ENCODE measurements at regions of chr2 and their contacts with region 1.

Region 1: GRCh38 chr2:136107051-136108033 is 10.6 kb downstream of the CXCR4 start:
- DNase-seq: no peak
- ATAC-seq: peak; percentile 68
- H3K4me3 ChIP-seq: no peak overlapping the region
- H3K27ac ChIP-seq: no peak overlapping the region
- H3K4me1 ChIP-seq: peaks cover 15% of the 10 kb centered on the region; the same call in 1 of the 2 replicates
- H3K27me3 ChIP-seq: no peaks in the 10 kb centered on the region
- CTCF ChIP-seq: no peak
- EP300 ChIP-seq: peak in 1 of 2 experiments; percentile 59; a peak in 2 of 4 replicates
- POLR2A ChIP-seq: no peak
- RAD21 ChIP-seq: no peak

Region 2: DNA sequence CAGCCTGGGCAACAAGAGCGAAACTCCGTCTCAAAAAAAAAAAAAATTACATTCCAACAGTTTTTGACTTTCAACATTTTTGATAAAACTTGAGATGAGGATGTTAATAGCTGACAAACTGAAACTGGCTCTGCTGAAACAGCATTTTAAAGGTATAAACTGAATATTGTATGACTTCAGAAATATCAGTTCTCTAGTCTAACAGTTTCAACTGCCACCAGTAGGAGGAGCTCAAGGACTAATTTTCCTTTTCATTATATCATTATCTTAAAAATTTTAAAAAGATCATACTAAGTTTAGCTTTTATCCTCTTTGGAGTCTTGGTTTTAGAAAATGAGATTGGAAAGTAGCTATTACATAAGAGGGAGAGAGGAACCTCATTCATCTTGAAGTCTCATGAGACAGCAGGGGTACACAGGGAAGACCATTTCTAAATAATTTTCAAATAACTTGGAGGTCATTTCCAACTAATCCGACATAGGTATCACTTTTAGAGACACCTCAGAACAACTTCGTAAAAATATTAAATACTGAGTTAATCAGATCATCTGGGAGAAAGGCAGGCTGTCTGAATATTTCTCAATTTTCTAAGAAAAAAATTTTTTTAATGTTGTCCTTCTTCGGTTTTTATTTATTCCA is 193.5 kb before region 1 on chr2:
- CTCF ChIA-PET with region 1: interaction called, 5 read pairs
- POLR2A ChIA-PET with region 1: no interaction called
- RAD21 ChIA-PET with region 1: interaction called, 7 read pairs
- SMC1A ChIA-PET with region 1: interaction called, 12 read pairs
- in situ Hi-C with region 1: no loop called
- intact Hi-C with region 1: no loop called
- DNase-seq: no peak
- ATAC-seq: peak; percentile 75
- H3K4me3 ChIP-seq: no peak overlapping the region
- H3K27ac ChIP-seq: no peak overlapping the region
- H3K4me1 ChIP-seq: no peaks in the 10 kb centered on the region
- H3K27me3 ChIP-seq: no peaks in the 10 kb centered on the region
- CTCF ChIP-seq: peak; percentile 58 to 68 (median 63); a peak in 5 of 6 replicates
- EP300 ChIP-seq: no peak
- POLR2A ChIP-seq: no peak
- RAD21 ChIP-seq: peak; percentile 75

Region 3: DNA sequence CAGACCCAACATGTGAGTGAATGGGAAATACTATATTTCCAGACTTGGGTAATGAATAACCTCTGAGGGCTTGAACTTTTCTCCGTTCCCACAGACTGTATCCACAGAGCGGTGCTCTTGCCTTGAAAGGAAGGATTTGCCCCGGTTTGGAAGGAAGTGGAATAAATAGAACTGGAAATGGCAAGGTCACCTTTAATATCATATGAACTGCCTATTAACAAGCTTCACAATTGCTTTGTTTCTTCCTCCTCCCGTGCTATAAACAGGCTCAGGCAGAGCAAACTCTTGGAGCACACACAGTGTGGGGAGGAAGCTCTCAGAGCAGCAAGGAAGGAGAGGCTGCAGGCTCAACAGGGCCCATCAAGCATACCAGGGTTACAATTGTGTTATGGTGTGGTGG is 93.4 kb before region 1 on chr2:
- CTCF ChIA-PET with region 1: interaction called, 5 read pairs
- POLR2A ChIA-PET with region 1: interaction called, 5 read pairs
- RAD21 ChIA-PET with region 1: interaction called, 3 read pairs
- SMC1A ChIA-PET with region 1: interaction called, 10 read pairs
- in situ Hi-C with region 1: no loop called
- intact Hi-C with region 1: no loop called
- DNase-seq: no peak
- ATAC-seq: no peak
- H3K4me3 ChIP-seq: no peak overlapping the region
- H3K27ac ChIP-seq: no peak overlapping the region
- H3K4me1 ChIP-seq: peaks cover 3% of the 10 kb centered on the region; the same call in 1 of the 2 replicates
- H3K27me3 ChIP-seq: no peaks in the 10 kb centered on the region
- CTCF ChIP-seq: no peak
- EP300 ChIP-seq: no peak
- POLR2A ChIP-seq: no peak
- RAD21 ChIP-seq: no peak

Region 4: DNA sequence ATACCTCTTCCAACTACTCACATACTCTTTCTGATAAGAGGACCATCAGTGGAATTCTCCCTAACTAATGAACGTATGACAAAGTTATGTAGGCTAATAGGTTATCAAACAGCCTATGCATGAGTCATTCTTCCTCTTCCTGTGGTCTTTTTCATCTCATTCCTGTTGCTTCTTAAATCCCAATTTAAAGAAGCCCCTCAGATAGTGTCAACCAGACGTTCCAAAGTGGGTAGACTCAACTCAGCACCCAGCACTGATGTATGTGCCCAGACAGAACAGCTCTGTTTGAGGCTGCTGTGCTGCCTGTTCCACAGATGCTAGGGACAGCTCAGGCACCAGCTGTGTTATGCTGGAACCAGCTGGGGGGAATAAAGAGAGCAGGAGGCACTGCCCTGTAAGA is 42.0 kb before region 1 on chr2:
- CTCF ChIA-PET with region 1: interaction called, 103 read pairs
- POLR2A ChIA-PET with region 1: interaction called, 21 read pairs
- RAD21 ChIA-PET with region 1: interaction called, 221 read pairs
- SMC1A ChIA-PET with region 1: interaction called, 400 read pairs
- in situ Hi-C with region 1: no loop called
- intact Hi-C with region 1: no loop called
- DNase-seq: no peak
- ATAC-seq: peak; percentile 66
- H3K4me3 ChIP-seq: no peak overlapping the region
- H3K27ac ChIP-seq: no peak overlapping the region
- H3K4me1 ChIP-seq: peaks cover 12% of the 10 kb centered on the region
- H3K27me3 ChIP-seq: peaks cover 0 to 3% of the 10 kb centered on the region in 2 experiments; a peak in 1 of 4 replicates
- CTCF ChIP-seq: no peak
- EP300 ChIP-seq: no peak
- POLR2A ChIP-seq: no peak
- RAD21 ChIP-seq: no peak

Region 5: DNA sequence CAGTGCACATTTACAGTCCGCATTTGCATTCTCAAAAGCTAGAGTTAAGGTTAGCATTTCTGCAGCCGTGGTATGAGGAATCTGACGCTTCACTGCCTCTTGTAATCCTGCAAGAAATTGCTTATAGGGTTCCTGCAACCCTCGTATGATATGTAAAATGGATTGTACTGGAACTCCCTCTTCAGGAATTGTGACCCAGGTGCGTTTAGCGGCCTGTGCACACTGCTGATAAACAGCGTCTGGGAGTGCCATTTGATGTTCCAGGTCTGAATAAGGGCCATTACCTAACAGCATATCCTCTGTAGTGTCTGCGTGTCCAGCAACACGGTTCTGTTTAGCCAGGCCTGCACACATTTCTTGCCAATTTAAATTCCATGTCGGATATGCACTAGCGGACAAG is 31.9 kb before region 1 on chr2:
- CTCF ChIA-PET with region 1: interaction called, 11 read pairs
- POLR2A ChIA-PET with region 1: no interaction called
- RAD21 ChIA-PET with region 1: interaction called, 15 read pairs
- SMC1A ChIA-PET with region 1: interaction called, 32 read pairs
- in situ Hi-C with region 1: no loop called
- intact Hi-C with region 1: no loop called
- DNase-seq: no peak
- ATAC-seq: no peak
- H3K4me3 ChIP-seq: no peak overlapping the region
- H3K27ac ChIP-seq: no peak overlapping the region
- H3K4me1 ChIP-seq: no peaks in the 10 kb centered on the region
- H3K27me3 ChIP-seq: no peaks in the 10 kb centered on the region
- CTCF ChIP-seq: no peak
- EP300 ChIP-seq: no peak
- POLR2A ChIP-seq: no peak
- RAD21 ChIP-seq: no peak

Region 6: GRCh38 chr2:136091899-136092421 is 15.4 kb before region 1 on chr2:
- CTCF ChIA-PET with region 1: interaction called, 7 read pairs
- POLR2A ChIA-PET with region 1: interaction called, 7 read pairs
- RAD21 ChIA-PET with region 1: interaction called, 5 read pairs
- SMC1A ChIA-PET with region 1: interaction called, 25 read pairs
- in situ Hi-C with region 1: no loop called
- intact Hi-C with region 1: no loop called
- DNase-seq: no peak
- ATAC-seq: no peak
- H3K4me3 ChIP-seq: no peak overlapping the region
- H3K27ac ChIP-seq: no peak overlapping the region
- H3K4me1 ChIP-seq: no peaks in the 10 kb centered on the region
- H3K27me3 ChIP-seq: peaks cover 0 to 4% of the 10 kb centered on the region in 2 experiments; a peak in 1 of 4 replicates
- CTCF ChIP-seq: no peak
- EP300 ChIP-seq: no peak
- POLR2A ChIP-seq: no peak
- RAD21 ChIP-seq: no peak

Region 7: GRCh38 chr2:136129601-136130000 is 22.3 kb after region 1 on chr2:
- CTCF ChIA-PET with region 1: interaction called, 3 read pairs
- POLR2A ChIA-PET with region 1: interaction called, 11 read pairs
- RAD21 ChIA-PET with region 1: interaction called, 7 read pairs
- SMC1A ChIA-PET with region 1: interaction called, 20 read pairs
- in situ Hi-C with region 1: no loop called
- intact Hi-C with region 1: no loop called
- DNase-seq: no peak
- ATAC-seq: no peak
- H3K4me3 ChIP-seq: no peak overlapping the region
- H3K27ac ChIP-seq: no peak overlapping the region
- H3K4me1 ChIP-seq: peaks cover 24% of the 10 kb centered on the region
- H3K27me3 ChIP-seq: peaks cover 0 to 9% of the 10 kb centered on the region in 2 experiments; a peak in 2 of 4 replicates
- CTCF ChIP-seq: no peak
- EP300 ChIP-seq: peak in 1 of 2 experiments; percentile 73; a peak in 2 of 4 replicates
- POLR2A ChIP-seq: no peak
- RAD21 ChIP-seq: no peak